ENCODE measurements at regions of chr1 and their contacts with region 1.

Region 1: DNA sequence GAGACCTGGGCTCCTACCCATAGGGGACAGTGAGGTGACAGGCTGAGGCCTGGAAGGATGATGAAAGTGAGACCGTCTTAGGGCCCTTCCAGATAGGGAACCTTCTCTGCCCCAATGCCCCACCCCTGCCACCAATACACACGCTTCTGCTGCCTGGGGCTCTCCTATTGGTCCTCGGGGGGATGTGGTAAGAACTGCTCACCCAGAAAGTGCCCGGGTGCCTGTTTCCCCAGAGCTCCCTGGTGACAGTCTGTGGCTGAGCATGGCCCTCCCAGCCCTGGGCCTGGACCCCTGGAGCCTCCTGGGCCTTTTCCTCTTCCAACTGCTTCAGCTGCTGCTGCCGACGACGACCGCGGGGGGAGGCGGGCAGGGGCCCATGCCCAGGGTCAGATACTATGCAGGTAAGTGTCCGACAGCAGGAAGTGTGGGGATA is 948 bp downstream of the SEMA4A start:
- DNase-seq: peak; percentile 53
- ATAC-seq: peak; percentile 91
- H3K4me3 Mint-ChIP-seq: peak overlapping the region; percentile 88
- H3K27ac Mint-ChIP-seq: peak overlapping the region; percentile 65
- H3K4me1 Mint-ChIP-seq: peaks cover 51% of the 10 kb centered on the region
- H3K27me3 Mint-ChIP-seq: no peaks in the 10 kb centered on the region

Region 2: DNA sequence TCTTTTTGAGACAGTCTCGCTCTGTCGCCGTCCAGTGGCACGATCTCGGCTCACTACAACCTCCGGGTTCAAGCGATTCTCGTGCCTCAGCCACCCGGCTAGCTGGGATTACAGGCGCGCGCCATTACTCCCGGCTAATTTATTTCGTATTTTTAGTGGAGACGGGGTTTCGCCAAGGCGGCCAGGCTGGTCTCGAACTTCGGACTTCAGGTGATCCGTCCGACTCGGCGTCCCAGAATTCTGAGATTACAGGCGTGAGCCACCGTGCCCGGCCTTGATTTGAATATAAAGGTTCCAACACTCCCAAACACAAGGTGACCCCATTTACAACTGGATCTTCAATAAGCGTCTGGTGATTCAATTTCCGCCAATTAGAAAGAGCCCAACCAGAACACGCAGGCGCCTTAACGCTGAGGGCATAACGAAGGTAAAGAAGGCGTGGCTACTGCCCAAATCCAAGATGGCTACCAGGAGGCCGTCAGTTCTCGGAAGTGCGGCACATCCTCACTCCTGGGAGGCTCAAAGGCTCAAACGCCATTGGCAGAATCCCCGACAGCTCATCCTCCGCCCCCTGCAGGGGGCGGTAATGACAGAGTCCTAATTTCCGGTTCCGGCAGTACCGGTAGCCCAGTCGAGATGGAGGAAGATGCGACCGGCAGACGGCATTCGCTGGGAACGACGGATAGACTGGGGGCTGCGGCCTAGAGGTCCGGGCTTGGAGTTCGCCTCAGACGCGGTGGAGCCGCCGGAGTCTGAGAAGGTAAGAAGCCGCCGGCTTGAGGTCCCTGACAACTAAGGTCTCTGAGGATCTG is 39.4 kb after region 1 on chr1 and contains the start of gene SLC25A44:
- POLR2A ChIA-PET with region 1: interaction called, 13 read pairs
- DNase-seq: peak; percentile 94
- ATAC-seq: peak; percentile 97
- H3K4me3 Mint-ChIP-seq: peak within 1 kb of the TSS; percentile 91
- H3K27ac Mint-ChIP-seq: peak within 1 kb of the TSS; percentile 86
- H3K4me1 Mint-ChIP-seq: peaks cover 42% of the 10 kb centered on the region
- H3K27me3 Mint-ChIP-seq: no peaks in the 10 kb centered on the region
- total RNA-seq, gene SLC25A44: 30.9 to 35.3 TPM